ENCODE measurements at regions of chr22 and their contacts with region 1.

Region 1: DNA sequence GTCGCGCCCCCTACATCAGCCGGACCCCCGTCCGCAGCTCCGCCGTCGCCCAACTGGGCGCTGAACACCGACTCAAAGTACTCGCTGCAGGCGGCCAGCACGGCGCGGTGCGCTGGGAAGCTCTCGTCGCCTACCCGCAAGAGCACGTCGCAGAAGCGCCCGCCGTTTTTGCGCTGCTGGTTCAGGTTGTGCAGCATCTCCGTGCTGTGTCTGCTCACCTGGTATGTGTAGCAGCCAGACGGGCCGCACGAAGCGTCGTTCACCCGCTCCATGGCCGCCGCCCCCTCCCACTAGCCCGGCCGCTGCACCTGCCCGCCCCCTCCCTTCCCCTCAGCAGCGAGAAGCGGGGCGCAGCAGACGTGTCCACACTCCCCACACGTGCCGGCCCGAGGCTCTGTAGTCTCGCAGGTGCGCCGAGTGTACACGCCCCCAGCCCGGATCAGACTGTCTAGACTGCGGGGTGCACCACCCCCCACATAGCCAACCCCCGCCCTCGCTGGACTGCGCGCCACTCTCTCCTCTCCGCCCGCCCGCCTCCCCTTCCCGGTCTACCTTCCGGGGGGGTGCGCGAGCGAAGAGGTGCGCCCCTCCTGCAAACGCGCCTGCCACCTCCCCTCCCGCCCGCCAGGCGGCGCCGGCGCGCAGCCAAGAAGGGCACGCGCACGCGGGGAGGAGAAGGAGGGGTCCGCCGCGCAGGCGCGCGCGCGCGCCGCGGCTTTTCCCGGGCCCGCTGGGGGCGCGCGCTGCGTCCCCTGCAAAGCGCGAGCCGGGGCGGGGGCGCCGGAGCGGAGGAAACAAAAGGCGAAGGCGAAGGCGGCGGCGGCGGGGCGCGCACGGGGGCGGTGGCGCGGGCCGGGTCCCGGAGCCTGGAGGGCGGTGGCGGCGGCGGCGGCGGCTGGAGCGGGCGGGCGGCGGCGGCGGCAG is 553 bp downstream of the PATZ1 start:
- DNase-seq: peak; percentile 91 to 94 (median 92)
- H3K4me3 ChIP-seq: peak overlapping the region; percentile 17 to 73
- H3K4me3 Mint-ChIP-seq: peak overlapping the region; percentile 85 to 98 (median 89)
- H3K27ac ChIP-seq: peak overlapping the region; percentile 56
- H3K27ac Mint-ChIP-seq: peak overlapping the region; percentile 78 to 96 (median 92)
- H3K4me1 ChIP-seq: peaks cover 52% of the 10 kb centered on the region
- H3K4me1 Mint-ChIP-seq: peaks cover 35 to 60% (median 43%) of the 10 kb centered on the region in 4 donors
- H3K27me3 ChIP-seq: no peaks in the 10 kb centered on the region
- H3K27me3 Mint-ChIP-seq: no peaks in the 10 kb centered on the region

Region 2: DNA sequence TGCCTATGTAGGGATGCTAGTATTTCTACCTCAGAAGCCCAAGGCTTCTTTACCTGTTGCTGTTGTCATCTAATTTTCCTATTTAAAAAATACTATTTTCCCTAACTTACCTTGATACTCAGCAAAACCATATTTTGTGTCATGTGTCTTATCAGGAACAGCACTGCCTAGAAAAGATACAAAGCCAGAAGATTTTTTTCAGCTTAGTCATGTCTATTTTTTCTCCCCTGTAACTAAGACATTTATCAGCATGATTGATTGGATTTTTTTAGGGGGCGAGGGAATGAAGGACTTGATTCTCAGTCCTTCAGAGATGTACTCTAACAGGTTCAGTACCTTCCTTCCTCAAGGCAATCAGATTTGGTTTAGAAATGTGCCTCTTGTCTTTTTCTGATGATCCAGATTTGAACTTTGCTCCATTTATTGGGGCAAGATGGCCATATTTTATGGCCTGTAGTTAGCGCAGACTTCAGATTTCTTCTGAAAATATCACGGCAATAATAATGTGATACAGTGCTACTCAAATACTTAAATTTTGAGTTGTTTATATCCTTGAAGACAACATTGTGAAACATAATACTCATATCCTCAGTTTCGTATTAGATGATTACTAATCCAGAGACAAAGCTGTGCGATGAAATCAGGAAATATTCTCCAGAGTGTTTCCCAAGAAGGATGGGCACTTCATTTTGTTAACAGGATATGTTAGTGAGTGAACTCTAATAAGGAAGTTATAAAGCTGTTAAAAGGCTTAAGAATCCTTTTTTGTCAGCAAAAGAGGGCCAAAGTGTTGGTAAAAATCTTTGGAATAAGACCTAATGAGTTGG is 49.5 kb before region 1 on chr22:
- CTCF ChIA-PET with region 1: interaction called, 6 read pairs
- POLR2A ChIA-PET with region 1: interaction called, 179 read pairs
- intact Hi-C with region 1: no loop called
- DNase-seq: no peak
- H3K4me3 ChIP-seq: peak overlapping the region; percentile 2 to 29
- H3K4me3 Mint-ChIP-seq: peak overlapping the region; percentile 19 to 86 (median 72)
- H3K27ac ChIP-seq: peak overlapping the region; percentile 7
- H3K27ac Mint-ChIP-seq: peak overlapping the region; percentile 70 to 89 (median 88)
- H3K4me1 ChIP-seq: peaks cover 49% of the 10 kb centered on the region
- H3K4me1 Mint-ChIP-seq: peaks cover 41 to 64% (median 51%) of the 10 kb centered on the region in 4 donors
- H3K27me3 ChIP-seq: no peaks in the 10 kb centered on the region
- H3K27me3 Mint-ChIP-seq: no peaks in the 10 kb centered on the region

Region 3: DNA sequence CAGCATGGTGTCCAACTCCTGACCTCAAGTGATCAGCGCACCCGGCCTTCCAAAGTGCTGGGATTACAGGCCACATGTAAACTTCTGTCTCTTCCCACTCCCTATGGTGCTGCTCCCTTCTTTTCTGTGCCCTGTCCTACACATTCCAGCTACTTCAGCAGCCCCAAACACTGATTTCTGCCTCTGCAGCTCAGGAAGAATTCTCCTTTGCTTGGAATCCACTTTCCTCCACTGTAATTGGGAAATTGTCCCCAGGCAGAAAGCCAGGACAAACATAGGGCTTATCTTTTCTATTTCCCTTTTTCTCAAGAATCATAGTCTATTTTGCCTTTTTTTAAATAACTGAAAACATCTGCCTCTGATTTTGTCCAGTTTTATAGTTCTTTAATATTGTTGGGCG is 32.5 kb after region 1 on chr22:
- CTCF ChIA-PET with region 1: no interaction called
- POLR2A ChIA-PET with region 1: no interaction called
- intact Hi-C with region 1: no loop called
- DNase-seq: no peak
- H3K4me3 ChIP-seq: no peak overlapping the region
- H3K4me3 Mint-ChIP-seq: no peak overlapping the region
- H3K27ac ChIP-seq: no peak overlapping the region
- H3K27ac Mint-ChIP-seq: no peak overlapping the region
- H3K4me1 ChIP-seq: no peaks in the 10 kb centered on the region
- H3K4me1 Mint-ChIP-seq: no peaks in the 10 kb centered on the region
- H3K27me3 ChIP-seq: no peaks in the 10 kb centered on the region
- H3K27me3 Mint-ChIP-seq: no peaks in the 10 kb centered on the region

Region 4: GRCh38 chr22:31489604-31490495 is 144.3 kb after region 1 on chr22 and contains the start of gene EIF4ENIF1:
- CTCF ChIA-PET with region 1: no interaction called
- POLR2A ChIA-PET with region 1: interaction called, 7 read pairs
- intact Hi-C with region 1: loop called (anchors 1 kb)
- DNase-seq: peak; percentile 88 to 91 (median 89)
- H3K4me3 ChIP-seq: peak within 1 kb of the TSS; percentile 70 to 77
- H3K4me3 Mint-ChIP-seq: peak within 1 kb of the TSS; percentile 92 to 99 (median 96)
- H3K27ac ChIP-seq: peak within 1 kb of the TSS; percentile 87
- H3K27ac Mint-ChIP-seq: peak within 1 kb of the TSS; percentile 94 to 99 (median 96)
- H3K4me1 ChIP-seq: peaks cover 52% of the 10 kb centered on the region
- H3K4me1 Mint-ChIP-seq: peaks cover 29 to 54% (median 39%) of the 10 kb centered on the region in 4 donors
- H3K27me3 ChIP-seq: no peaks in the 10 kb centered on the region
- H3K27me3 Mint-ChIP-seq: no peaks in the 10 kb centered on the region
- total RNA-seq, gene EIF4ENIF1: 41.9 to 50.7 TPM

Region 5: GRCh38 chr22:31630331-31631329 is 285.0 kb after region 1 on chr22:
- CTCF ChIA-PET with region 1: interaction called, 3 read pairs
- POLR2A ChIA-PET with region 1: interaction called, 15 read pairs
- intact Hi-C with region 1: loop called (anchors 1 kb)
- DNase-seq: peak; percentile 88 to 94 (median 89)
- H3K4me3 ChIP-seq: peak overlapping the region; percentile 29 to 69
- H3K4me3 Mint-ChIP-seq: peak overlapping the region; percentile 86 to 89 (median 88)
- H3K27ac ChIP-seq: peak overlapping the region; percentile 86
- H3K27ac Mint-ChIP-seq: peak overlapping the region; percentile 88 to 96 (median 94)
- H3K4me1 ChIP-seq: peaks cover 56% of the 10 kb centered on the region
- H3K4me1 Mint-ChIP-seq: peaks cover 20 to 66% (median 39%) of the 10 kb centered on the region in 4 donors
- H3K27me3 ChIP-seq: no peaks in the 10 kb centered on the region
- H3K27me3 Mint-ChIP-seq: no peaks in the 10 kb centered on the region

Measured in CD4-positive, alpha-beta memory T cell (primary cell).